CD8-positive, alpha-beta T cell (primary cell): ENCODE measurements at regions of chr11 and their contacts with region 1.

Region 1: DNA sequence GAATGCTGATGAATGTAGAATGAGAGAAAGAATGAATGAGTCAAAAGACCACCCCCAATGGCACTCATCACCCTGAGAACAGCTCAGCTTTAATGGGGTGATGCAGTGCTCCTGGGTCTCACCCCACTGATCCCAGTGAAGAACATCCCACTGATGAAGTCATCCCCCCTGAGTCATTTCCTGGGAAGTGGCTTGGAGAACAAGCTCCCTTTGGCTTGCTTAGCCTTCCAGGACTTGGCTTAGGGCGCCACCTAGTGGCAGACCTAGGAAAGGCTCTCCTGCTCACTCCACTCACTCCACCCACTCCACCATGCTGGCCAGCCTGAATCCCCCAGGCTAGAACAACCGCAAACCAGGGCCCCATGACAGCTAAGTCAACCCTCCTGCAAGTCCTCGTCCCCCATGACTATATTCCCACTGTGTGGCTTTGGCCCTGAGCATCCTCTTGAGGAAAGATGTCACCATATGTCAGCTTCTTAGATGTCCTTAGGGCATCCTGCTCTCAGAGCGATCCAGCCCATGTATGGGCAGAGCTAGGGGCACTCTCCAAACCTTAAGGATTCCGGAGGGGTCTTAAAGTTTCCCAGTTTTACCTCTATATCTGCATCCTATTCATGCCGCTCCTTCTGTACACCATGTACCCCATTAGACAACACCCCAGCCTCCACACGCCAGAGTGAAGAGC is 17.8 kb upstream of the TMPRSS13 start:
- DNase-seq: peak; percentile 60 to 93 (median 83)
- ATAC-seq: peak; percentile 13
- H3K4me3 ChIP-seq: no peak overlapping the region
- H3K4me3 Mint-ChIP-seq: peak overlapping the region; percentile 37
- H3K27ac ChIP-seq: no peak overlapping the region
- H3K27ac Mint-ChIP-seq: peak overlapping the region; percentile 66
- H3K4me1 ChIP-seq: peaks cover 51% of the 10 kb centered on the region
- H3K4me1 Mint-ChIP-seq: peaks cover 69% of the 10 kb centered on the region
- H3K27me3 ChIP-seq: no peaks in the 10 kb centered on the region
- H3K27me3 Mint-ChIP-seq: no peaks in the 10 kb centered on the region
- CTCF ChIP-seq: peak; percentile 89

Region 2: DNA sequence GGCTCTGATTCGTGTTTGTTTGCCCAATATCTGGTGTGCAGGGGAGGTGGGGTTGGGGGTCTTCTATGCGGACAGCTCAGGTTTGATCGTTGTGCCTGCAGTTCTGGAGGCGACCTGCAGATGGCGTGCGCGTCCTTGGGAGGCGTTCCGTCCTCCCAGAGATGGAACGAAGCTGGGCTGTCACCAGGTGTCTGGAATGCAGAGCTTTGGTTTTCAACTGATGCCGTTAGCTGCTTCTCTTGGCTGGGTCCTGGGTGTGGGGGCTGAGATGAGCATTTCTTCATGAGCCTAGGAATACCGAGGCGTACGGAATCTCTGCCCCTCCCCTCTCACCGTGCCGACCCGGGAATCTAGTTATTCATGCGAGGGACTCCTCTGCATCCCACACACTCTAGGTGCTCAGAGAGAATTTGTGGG is 520.7 kb before region 1 on chr11:
- CTCF ChIA-PET with region 1: interaction called, 6 read pairs
- POLR2A ChIA-PET with region 1: no interaction called
- intact Hi-C with region 1: loop called (anchors 2 to 10 kb)
- DNase-seq: peak; percentile 32 to 83 (median 65)
- ATAC-seq: peak; percentile 54
- H3K4me3 ChIP-seq: no peak overlapping the region
- H3K4me3 Mint-ChIP-seq: no peak overlapping the region
- H3K27ac ChIP-seq: no peak overlapping the region
- H3K27ac Mint-ChIP-seq: no peak overlapping the region
- H3K4me1 ChIP-seq: peaks cover 3% of the 10 kb centered on the region
- H3K4me1 Mint-ChIP-seq: no peaks in the 10 kb centered on the region
- H3K27me3 ChIP-seq: peaks cover 0 to 3% of the 10 kb centered on the region in 2 experiments
- H3K27me3 Mint-ChIP-seq: peaks cover 4% of the 10 kb centered on the region
- CTCF ChIP-seq: peak; percentile 97

Region 3: DNA sequence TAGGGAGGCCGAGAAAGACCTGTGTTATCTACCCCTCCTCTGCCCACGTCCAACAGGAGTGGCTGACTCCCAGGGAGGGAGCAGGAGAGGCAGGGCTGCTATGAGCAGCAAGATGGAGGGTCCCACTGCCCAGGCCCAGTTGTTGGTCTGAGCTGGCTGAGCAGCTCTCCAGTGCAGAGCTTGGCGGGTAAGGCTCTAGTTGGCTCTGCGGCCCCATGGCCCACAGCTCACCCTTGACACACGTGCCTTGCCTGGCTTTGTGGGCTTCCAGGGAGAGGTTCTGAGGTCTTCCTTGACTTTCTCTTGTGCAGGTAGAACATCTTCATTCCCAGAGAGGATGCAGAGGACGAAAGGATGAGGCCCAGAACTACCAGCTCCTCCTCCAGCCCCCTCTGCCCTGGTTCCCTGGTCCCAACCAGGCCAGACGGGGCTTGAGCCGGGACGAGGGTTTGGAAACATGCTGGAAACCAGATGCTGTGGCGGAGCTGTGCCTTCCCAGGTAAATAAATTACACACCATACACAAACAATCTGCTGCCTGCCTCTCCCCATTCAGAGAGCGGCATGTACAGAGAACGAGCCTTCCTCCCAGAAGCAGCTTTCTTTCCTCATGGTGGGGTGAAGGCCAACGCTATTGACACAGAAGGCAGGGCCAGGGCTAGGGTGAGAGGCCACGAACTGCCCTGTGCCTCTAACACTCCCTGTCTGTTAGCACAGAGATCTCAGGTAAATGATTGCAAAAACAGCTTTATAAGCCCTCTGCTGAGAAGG is 198.0 kb before region 1 on chr11:
- CTCF ChIA-PET with region 1: no interaction called
- POLR2A ChIA-PET with region 1: no interaction called
- intact Hi-C with region 1: no loop called
- DNase-seq: no peak
- ATAC-seq: no peak
- H3K4me3 ChIP-seq: no peak overlapping the region
- H3K4me3 Mint-ChIP-seq: no peak overlapping the region
- H3K27ac ChIP-seq: no peak overlapping the region
- H3K27ac Mint-ChIP-seq: no peak overlapping the region
- H3K4me1 ChIP-seq: no peaks in the 10 kb centered on the region
- H3K4me1 Mint-ChIP-seq: no peaks in the 10 kb centered on the region
- H3K27me3 ChIP-seq: no peaks in the 10 kb centered on the region
- H3K27me3 Mint-ChIP-seq: peaks cover under 1% of the 10 kb centered on the region
- CTCF ChIP-seq: no peak

Region 4: GRCh38 chr11:117843666-117844484 is 103.1 kb before region 1 on chr11:
- CTCF ChIA-PET with region 1: interaction called, 217 read pairs
- POLR2A ChIA-PET with region 1: interaction called, 5 read pairs
- intact Hi-C with region 1: loop called (anchors 1 kb)
- DNase-seq: peak; percentile 61 to 91 (median 84)
- ATAC-seq: peak; percentile 97
- H3K4me3 ChIP-seq: no peak overlapping the region
- H3K4me3 Mint-ChIP-seq: no peak overlapping the region
- H3K27ac ChIP-seq: no peak overlapping the region
- H3K27ac Mint-ChIP-seq: no peak overlapping the region
- H3K4me1 ChIP-seq: no peaks in the 10 kb centered on the region
- H3K4me1 Mint-ChIP-seq: peaks cover 4% of the 10 kb centered on the region
- H3K27me3 ChIP-seq: no peaks in the 10 kb centered on the region
- H3K27me3 Mint-ChIP-seq: no peaks in the 10 kb centered on the region
- CTCF ChIP-seq: peak; percentile 98

Region 5: DNA sequence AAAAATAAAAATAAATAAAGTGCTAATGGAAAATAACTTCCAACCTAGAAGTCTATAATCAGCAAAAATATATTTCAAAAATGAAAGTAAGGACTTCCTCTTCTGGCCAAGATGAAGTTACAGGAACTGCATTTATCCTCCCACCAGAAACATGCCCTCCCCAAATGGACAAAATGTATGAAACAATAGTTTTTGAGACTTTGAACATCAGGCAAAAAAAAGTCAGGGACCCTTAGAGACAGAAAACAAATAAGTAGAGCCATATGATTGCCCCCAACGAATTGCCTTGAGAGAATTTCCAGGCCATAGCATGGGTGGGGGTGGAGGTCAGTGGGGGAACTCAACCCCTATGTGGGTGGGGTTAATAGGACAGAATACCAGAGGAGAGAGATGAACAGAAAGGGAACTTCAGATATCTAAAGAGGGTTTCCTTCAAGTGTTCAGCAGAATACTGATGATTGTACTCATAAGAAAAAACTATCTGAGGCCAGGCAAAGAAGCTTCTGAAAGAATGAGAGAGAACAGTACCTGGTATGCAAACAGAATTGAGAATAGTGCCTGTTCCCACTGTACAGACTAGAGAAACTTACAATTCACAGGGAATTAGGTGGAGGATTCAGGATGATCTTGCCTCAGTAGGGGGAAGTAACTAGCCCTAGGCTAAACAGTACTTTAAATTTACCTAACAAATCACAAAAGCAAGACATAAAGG is 12.6 kb after region 1 on chr11:
- CTCF ChIA-PET with region 1: interaction called, 18 read pairs
- POLR2A ChIA-PET with region 1: interaction called, 9 read pairs
- intact Hi-C with region 1: no loop called
- DNase-seq: no peak
- ATAC-seq: no peak
- H3K4me3 ChIP-seq: no peak overlapping the region
- H3K4me3 Mint-ChIP-seq: no peak overlapping the region
- H3K27ac ChIP-seq: no peak overlapping the region
- H3K27ac Mint-ChIP-seq: peak overlapping the region; percentile 41
- H3K4me1 ChIP-seq: peaks cover 8% of the 10 kb centered on the region
- H3K4me1 Mint-ChIP-seq: peaks cover 53% of the 10 kb centered on the region
- H3K27me3 ChIP-seq: no peaks in the 10 kb centered on the region
- H3K27me3 Mint-ChIP-seq: no peaks in the 10 kb centered on the region
- CTCF ChIP-seq: no peak

Region 6: DNA sequence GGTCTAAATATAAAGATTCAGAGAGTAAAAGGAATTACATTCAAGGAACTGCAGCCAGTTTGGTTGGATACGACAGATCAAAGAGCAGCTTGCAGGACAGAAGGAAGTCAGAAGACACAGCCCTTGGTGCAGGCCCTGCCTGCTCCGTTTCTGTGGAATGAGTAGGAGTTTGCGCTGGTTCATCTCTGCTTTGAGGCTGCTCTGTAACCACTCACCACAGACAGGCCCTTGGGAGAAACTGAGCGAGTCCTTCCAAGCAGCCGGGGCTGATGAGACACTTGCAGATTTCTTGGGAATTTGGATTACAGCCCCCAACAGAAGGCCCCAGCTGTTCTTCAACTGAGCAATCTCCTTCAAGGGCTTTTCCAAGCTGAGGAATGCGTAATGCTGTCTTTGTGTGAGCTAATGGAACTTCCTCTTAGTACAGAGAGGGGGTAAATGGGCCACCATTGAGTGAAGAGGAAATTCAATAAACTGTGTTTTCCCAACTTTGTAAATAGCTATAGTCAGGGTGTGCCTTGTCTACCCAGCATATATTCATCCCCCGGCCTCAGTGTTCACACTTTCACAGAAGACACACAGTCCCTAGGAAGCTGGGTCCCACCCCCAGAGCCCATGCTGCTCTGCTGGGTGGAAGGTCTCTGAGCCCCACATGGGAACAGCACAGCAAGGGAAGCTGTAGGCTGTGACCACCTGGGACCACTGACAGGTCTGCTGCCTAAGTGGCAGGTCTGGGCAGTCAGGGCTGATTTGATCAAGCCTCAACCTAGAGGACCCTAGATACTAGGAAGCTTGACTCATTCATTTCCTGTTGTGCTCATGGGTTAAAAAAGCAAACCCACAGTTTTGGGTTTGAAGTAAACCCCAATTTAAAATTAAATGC is 55.8 kb after region 1 on chr11:
- CTCF ChIA-PET with region 1: interaction called, 403 read pairs
- POLR2A ChIA-PET with region 1: interaction called, 438 read pairs
- intact Hi-C with region 1: loop called in 1 of 2 experiments (anchors 1 kb)
- DNase-seq: peak in 5 of 9 experiments; percentile 42 to 76 (median 55)
- ATAC-seq: peak; percentile 42
- H3K4me3 ChIP-seq: no peak overlapping the region
- H3K4me3 Mint-ChIP-seq: peak overlapping the region; percentile 26
- H3K27ac ChIP-seq: peak overlapping the region; percentile 20 to 84
- H3K27ac Mint-ChIP-seq: peak overlapping the region; percentile 91
- H3K4me1 ChIP-seq: peaks cover 89% of the 10 kb centered on the region
- H3K4me1 Mint-ChIP-seq: peaks cover 94% of the 10 kb centered on the region
- H3K27me3 ChIP-seq: no peaks in the 10 kb centered on the region
- H3K27me3 Mint-ChIP-seq: no peaks in the 10 kb centered on the region
- CTCF ChIP-seq: no peak

Region 7: DNA sequence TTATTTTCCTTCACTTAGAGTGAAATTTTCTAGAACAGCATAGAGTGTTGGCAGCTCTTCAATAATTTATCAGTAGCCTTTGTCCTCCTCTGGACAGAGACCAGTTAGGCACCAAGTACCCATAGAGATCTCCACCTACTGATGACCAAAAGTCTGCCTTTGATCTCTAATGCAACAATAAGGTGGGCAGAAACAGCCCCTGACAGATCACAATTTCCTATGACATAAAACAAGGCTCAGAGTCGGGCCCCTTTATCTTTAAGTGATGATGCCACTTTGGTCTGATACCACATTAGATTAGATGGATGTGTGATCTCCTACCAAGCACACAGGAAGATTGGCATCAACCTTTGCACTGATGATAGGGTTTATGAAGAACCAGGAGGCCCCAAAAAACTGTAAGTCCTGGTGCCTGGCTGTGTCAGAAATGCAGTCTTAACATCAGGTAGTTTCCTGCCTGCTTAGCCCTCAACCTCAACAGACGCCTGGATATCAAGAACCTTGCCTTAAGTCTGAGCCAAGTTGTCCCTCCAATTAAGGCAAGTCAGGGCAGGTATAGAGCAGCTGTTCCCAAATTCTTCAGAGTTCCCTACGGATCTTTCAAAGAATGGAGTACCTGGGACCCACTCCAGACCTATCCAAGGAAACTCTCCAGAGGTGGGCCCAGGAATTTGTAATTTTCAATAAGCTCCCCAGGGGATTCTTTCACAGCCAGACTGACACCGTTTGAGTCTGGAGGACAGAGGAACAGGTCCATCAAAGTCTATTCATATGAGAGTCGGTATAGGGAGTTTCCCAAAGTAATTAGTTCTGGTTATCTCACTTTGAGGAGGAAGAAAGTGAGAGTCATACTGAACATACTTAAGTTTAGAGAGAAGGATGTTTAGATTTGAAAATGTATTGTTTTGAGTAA is 99.3 kb after region 1 on chr11:
- CTCF ChIA-PET with region 1: interaction called, 357 read pairs
- POLR2A ChIA-PET with region 1: interaction called, 100 read pairs
- intact Hi-C with region 1: no loop called
- DNase-seq: peak; percentile 18 to 88 (median 59)
- ATAC-seq: peak; percentile 83
- H3K4me3 ChIP-seq: no peak overlapping the region
- H3K4me3 Mint-ChIP-seq: peak overlapping the region; percentile 38
- H3K27ac ChIP-seq: peak overlapping the region; percentile 40 to 82
- H3K27ac Mint-ChIP-seq: peak overlapping the region; percentile 94
- H3K4me1 ChIP-seq: peaks cover 91% of the 10 kb centered on the region
- H3K4me1 Mint-ChIP-seq: peaks cover 83% of the 10 kb centered on the region
- H3K27me3 ChIP-seq: no peaks in the 10 kb centered on the region
- H3K27me3 Mint-ChIP-seq: no peaks in the 10 kb centered on the region
- CTCF ChIP-seq: no peak